ENCODE measurements at regions of chr6 and their contacts with region 1.

Region 1: DNA sequence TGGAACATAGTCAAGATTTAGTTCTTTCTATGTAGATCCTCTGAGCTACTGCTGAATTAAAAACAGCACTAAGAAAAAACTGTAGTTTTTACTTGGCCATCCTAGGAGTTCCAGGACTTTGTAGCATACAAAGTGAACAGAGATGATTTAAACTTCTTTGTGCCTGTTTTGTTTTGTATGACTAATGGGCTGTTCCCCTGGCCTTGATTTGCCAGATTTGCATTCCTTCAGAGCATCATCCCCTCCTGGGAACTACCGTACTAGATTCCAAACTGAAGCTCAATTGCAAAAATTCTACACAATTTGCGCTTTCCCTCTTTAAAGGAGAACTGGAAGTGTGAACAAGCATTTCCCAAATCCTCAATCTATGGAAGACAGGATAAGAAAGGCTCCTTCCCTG is 23.1 kb downstream of the ACOT13 start:
- DNase-seq: no peak
- ATAC-seq: no peak
- H3K4me3 ChIP-seq: no peak overlapping the region
- H3K27ac ChIP-seq: no peak overlapping the region
- H3K4me1 ChIP-seq: peaks cover 5% of the 10 kb centered on the region; the same call in 1 of the 2 replicates
- H3K27me3 ChIP-seq: no peaks in the 10 kb centered on the region
- CTCF ChIP-seq: no peak
- EP300 ChIP-seq: no peak
- POLR2A ChIP-seq: no peak
- RAD21 ChIP-seq: no peak

Region 2: GRCh38 chr6:24431045-24431451 is 258.9 kb before region 1 on chr6:
- CTCF ChIA-PET with region 1: no interaction called
- POLR2A ChIA-PET with region 1: interaction called, 4 read pairs
- in situ Hi-C with region 1: loop called (anchors 10 kb)
- intact Hi-C with region 1: loop called (anchors 2 kb)
- DNase-seq: peak; percentile 65
- ATAC-seq: peak; percentile 82
- H3K4me3 ChIP-seq: no peak overlapping the region
- H3K27ac ChIP-seq: no peak overlapping the region
- H3K4me1 ChIP-seq: no peaks in the 10 kb centered on the region
- H3K27me3 ChIP-seq: no peaks in the 10 kb centered on the region
- CTCF ChIP-seq: peak; percentile 76
- EP300 ChIP-seq: no peak
- POLR2A ChIP-seq: no peak
- RAD21 ChIP-seq: peak; percentile 56; the same call in 1 of the 2 replicates

Region 3: DNA sequence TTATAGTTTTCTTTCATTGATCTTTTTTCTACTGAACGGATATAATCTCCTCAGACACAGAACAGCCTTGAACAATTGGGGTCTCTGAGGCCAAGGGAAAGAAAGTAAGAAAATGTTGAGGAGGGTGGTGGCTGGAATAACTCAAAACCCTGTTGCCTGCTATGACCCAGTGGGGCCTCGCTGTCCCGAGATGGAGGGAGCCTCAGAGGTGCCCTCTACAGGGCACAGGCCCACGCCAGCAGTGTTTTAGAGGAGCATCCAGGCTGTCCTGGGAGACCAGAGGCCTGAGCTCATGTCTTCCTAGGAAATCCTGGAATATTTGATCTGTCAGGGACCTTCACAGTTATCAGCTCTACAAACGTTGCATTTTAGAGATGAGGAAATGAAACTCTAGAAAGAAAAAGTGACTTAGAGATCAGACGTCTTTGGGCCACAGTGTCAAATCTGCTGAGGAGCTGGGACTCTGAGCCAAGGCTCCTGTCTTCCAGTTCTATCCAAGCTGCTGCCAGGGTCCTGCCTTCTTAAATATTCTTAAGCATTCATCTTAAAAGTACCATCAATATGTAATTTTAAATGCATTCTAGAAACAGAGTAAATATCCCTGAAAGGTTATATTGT is 168.9 kb before region 1 on chr6:
- CTCF ChIA-PET with region 1: interaction called, 5 read pairs
- POLR2A ChIA-PET with region 1: no interaction called
- in situ Hi-C with region 1: no loop called
- intact Hi-C with region 1: loop called (anchors 10 kb)
- DNase-seq: peak; percentile 62
- ATAC-seq: peak; percentile 100
- H3K4me3 ChIP-seq: no peak overlapping the region
- H3K27ac ChIP-seq: no peak overlapping the region
- H3K4me1 ChIP-seq: no peaks in the 10 kb centered on the region; the same call in 1 of the 2 replicates
- H3K27me3 ChIP-seq: no peaks in the 10 kb centered on the region
- CTCF ChIP-seq: peak; percentile 93
- EP300 ChIP-seq: no peak
- POLR2A ChIP-seq: no peak
- RAD21 ChIP-seq: peak; percentile 87

Region 4: DNA sequence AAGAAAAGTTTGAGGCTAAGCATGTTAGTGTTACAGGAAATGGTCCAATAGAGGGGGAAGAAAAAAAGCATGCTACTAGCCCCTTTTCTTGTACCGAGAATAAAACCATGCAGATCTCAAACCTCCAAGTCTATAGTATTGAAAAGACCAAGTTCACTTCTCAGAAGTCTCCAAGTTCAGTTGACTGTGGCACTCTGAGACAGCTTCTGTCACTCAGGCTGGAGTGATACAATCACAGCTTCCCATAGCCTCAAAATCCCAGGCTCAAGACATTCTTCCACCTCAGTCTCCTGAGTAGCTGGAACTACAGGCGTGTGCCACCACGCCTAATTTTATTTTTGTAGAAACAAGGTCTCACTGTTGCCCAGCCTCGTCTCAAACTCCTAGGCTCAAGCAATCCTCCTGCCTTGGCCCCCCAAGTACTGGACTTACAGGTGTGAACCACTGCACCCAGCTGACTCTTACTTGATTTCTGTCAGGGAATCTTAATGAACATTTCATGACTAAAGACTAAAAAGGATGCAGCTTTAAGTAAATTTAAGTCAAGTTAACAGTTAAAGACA is 12.8 kb after region 1 on chr6:
- CTCF ChIA-PET with region 1: no interaction called
- POLR2A ChIA-PET with region 1: no interaction called
- in situ Hi-C with region 1: no loop called
- intact Hi-C with region 1: no loop called
- DNase-seq: no peak
- ATAC-seq: peak; percentile 8
- H3K4me3 ChIP-seq: no peak overlapping the region
- H3K27ac ChIP-seq: no peak overlapping the region
- H3K4me1 ChIP-seq: peaks cover 12% of the 10 kb centered on the region
- H3K27me3 ChIP-seq: no peaks in the 10 kb centered on the region
- CTCF ChIP-seq: no peak
- EP300 ChIP-seq: no peak
- POLR2A ChIP-seq: 0 out of 4 replicates have a peak, but pooled peaks of 1 of the 2 experiments have one; percentile 17
- RAD21 ChIP-seq: no peak

Region 5: GRCh38 chr6:24891004-24891403 is 201.0 kb after region 1 on chr6:
- CTCF ChIA-PET with region 1: no interaction called
- POLR2A ChIA-PET with region 1: no interaction called
- in situ Hi-C with region 1: no loop called
- intact Hi-C with region 1: no loop called
- DNase-seq: no peak
- ATAC-seq: no peak
- H3K4me3 ChIP-seq: no peak overlapping the region
- H3K27ac ChIP-seq: no peak overlapping the region
- H3K4me1 ChIP-seq: no peaks in the 10 kb centered on the region
- H3K27me3 ChIP-seq: no peaks in the 10 kb centered on the region; a peak in 1 of 5 replicates
- CTCF ChIP-seq: no peak
- EP300 ChIP-seq: no peak
- POLR2A ChIP-seq: no peak
- RAD21 ChIP-seq: no peak